Gastrocnemius medialis (tissue), 4 donors: ENCODE measurements at regions of chr15 and their contacts with region 1.

Region 1: DNA sequence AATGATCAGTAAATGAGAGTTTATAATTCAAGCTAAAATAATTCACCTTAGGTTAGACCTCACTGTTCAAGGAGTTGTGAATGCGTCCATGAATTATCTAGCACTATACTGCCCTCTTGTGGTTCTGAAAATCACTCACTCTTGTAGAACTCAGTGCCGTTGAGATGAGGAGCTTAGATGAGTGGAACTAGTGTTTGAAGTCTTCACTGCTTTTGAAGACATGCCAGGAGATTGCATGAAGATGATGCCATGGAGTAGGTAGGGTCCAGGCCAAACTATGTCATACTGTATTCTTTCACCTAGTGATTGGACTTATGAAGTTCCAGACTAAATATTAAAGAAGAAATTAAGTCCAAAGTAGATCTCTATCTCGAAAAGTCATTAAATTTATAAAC is 28.8 kb downstream of the LYSMD4 start:
- DNase-seq: peak in 1 of 2 donors; percentile 44
- ATAC-seq: peak; percentile 59 to 71
- H3K4me3 ChIP-seq: no peak overlapping the region
- H3K27ac ChIP-seq: peak overlapping the region; percentile 82 to 90 (median 84)
- H3K4me1 ChIP-seq: peaks cover 41 to 53% of the 10 kb centered on the region in 2 donors
- H3K27me3 ChIP-seq: no peaks in the 10 kb centered on the region
- CTCF ChIP-seq: peak; percentile 75 to 83 (median 79)
- POLR2A ChIP-seq: no peak

Region 2: DNA sequence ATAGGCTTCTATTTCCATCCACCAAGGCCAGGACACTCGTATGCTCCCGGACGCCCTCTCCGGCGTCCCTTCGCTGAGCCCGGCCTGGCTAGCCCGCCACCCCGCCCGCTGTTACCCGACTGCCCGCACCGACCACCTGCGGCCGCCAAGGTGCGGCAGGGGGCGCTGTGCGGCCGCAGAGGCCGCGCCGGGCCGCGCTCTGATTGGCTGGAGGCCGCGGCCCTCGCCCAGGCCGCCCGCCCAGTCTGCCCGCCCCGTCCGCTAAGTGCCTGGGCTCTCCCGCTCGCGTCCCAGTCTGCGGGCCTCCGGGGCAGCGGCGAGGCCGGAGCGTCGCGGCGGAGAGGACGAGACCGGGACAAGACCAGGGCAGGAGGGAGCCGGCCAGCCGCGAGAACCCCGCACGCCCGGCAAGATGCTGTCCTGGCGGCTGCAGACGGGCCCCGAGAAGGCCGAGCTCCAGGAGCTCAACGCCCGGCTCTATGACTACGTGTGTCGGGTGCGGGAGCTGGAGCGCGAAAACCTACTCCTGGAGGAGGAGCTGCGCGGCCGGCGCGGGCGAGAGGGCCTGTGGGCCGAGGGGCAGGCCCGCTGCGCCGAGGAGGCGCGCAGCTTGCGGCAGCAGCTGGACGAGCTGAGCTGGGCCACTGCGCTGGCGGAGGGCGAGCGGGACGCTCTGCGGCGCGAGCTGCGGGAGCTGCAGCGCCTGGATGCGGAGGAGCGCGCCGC is 599.5 kb before region 1 on chr15 and contains the start of gene SYNM:
- in situ Hi-C with region 1: no loop called
- intact Hi-C with region 1: loop called (anchors 10 kb)
- DNase-seq: peak; percentile 73 to 91
- ATAC-seq: peak; percentile 53 to 57
- H3K4me3 ChIP-seq: peak within 1 kb of the TSS; percentile 63 to 86 (median 75)
- H3K27ac ChIP-seq: peak within 1 kb of the TSS; percentile 88 to 97 (median 94)
- H3K4me1 ChIP-seq: peaks cover 43 to 56% of the 10 kb centered on the region in 2 donors
- H3K27me3 ChIP-seq: no peaks in the 10 kb centered on the region
- CTCF ChIP-seq: peak; percentile 79 to 98 (median 98)
- POLR2A ChIP-seq: peak; percentile 89 to 93
- total RNA-seq, gene SYNM: 200 to 308 (median 266) TPM

Region 3: DNA sequence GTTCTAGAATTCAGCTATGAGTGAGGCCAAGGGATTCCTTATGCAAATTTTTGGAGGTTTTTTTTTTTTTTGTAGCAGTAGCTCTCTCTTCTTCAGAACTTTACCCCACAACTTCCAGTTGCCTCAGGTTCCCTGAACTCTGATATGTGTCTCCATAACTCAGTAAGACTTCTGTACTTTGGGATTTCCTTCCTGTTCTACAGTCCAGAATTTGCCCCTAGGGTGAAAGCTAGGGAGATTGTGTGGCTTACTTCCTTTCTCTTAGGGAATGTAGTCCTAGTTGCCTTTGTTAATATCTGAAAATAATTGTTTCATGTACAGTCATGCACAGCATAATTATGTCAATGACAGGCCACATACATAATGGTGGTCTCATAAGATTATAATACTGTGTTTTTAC is 422.3 kb before region 1 on chr15:
- in situ Hi-C with region 1: loop called in 2 of 4 experiments (anchors 25 kb)
- intact Hi-C with region 1: loop called (anchors 1 kb)
- DNase-seq: no peak
- ATAC-seq: no peak
- H3K4me3 ChIP-seq: no peak overlapping the region
- H3K27ac ChIP-seq: peak overlapping the region in 1 of 4 donors; percentile 34
- H3K4me1 ChIP-seq: peaks cover 11 to 18% of the 10 kb centered on the region in 2 donors
- H3K27me3 ChIP-seq: no peaks in the 10 kb centered on the region
- CTCF ChIP-seq: no peak
- POLR2A ChIP-seq: no peak

Region 4: DNA sequence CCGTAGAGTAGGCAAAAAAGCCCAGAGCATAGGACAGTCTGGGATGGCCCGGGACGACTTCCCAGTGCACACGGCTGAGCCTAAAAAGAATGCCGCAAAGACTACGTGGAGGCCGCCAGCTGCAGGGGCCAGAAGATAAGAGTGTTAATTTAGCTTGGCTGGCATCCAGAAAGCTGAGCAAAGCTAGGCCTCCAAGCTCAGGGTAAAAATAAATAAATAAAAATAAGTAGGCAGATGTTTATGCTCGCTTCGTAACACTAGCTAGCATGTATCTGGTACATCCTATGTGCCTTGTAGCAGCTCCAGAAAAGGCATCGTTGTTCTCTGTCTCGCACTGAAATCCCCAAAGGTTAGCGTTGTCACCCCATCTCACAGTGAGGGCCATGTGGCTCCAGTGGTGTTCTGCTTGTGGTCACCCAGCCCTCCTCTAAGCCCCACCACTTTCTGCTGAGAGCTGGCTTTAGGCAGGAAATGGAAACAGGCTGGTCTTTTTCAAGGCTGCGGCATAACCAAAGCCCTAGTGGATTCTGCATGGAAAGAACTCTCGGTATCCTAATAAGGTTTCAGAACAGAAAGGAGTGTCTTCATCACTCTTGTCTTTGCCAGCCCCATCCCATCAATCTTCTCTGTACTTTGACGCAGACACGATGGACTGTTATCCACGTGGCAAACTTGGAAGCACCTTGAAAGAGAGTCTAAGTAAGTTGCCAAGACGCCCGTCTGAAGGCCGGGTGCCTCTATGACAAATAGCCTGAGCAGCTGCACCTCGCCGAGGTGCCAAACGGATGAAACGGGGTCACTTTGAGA is 196.7 kb before region 1 on chr15:
- in situ Hi-C with region 1: no loop called
- intact Hi-C with region 1: loop called (anchors 2 kb)
- DNase-seq: peak; percentile 90 to 97
- ATAC-seq: peak; percentile 82 to 86
- H3K4me3 ChIP-seq: peak overlapping the region; percentile 31 to 48 (median 34)
- H3K27ac ChIP-seq: peak overlapping the region; percentile 91 to 94 (median 92)
- H3K4me1 ChIP-seq: peaks cover 61 to 70% of the 10 kb centered on the region in 2 donors
- H3K27me3 ChIP-seq: no peaks in the 10 kb centered on the region
- CTCF ChIP-seq: peak in 1 of 5 experiments; percentile 19
- POLR2A ChIP-seq: peak in 1 of 2 donors; percentile 60

Region 5: DNA sequence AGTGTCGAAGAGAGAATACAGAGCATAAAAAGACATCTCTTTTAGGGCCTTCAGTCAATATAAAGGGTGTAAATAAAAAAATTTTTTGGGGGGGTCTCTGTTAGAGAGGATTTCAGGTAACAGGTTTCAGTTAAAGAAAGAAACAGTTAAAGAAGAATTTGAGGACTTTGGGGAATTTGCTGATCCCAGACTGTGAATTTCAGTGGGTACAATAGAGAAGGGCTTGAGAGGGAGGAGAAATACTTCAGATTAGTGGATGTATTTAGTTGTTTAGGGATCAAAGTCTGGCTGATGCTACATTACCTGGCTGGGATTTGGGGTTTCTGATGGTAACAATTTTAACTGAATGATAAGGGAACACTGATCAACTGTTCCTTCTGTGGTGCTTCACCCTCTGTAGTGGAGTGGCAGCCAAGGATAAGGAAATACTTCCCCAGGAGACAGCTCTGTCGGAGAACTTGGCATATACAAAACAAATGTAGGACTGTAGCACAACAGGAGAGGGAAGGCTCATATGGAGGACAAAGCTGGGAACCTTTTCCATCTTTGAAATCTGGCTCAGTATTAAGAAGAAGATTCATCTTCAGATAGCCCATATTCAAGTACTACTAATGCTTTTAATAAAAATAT is 59.4 kb before region 1 on chr15:
- in situ Hi-C with region 1: no loop called
- intact Hi-C with region 1: no loop called
- DNase-seq: no peak
- ATAC-seq: peak in 1 of 2 donors; percentile 54
- H3K4me3 ChIP-seq: no peak overlapping the region
- H3K27ac ChIP-seq: no peak overlapping the region
- H3K4me1 ChIP-seq: peaks cover 13 to 15% of the 10 kb centered on the region in 2 donors
- H3K27me3 ChIP-seq: no peaks in the 10 kb centered on the region
- CTCF ChIP-seq: no peak
- POLR2A ChIP-seq: no peak

Region 6: GRCh38 chr15:99733268-99734039 is 29.0 kb after region 1 on chr15 and contains the start of gene LYSMD4:
- in situ Hi-C with region 1: no loop called
- intact Hi-C with region 1: loop called (anchors 2 kb)
- DNase-seq: peak; percentile 97 to 98
- ATAC-seq: peak; percentile 87 to 91
- H3K4me3 ChIP-seq: peak within 1 kb of the TSS; percentile 76 to 98 (median 84)
- H3K27ac ChIP-seq: peak within 1 kb of the TSS; percentile 85 to 94 (median 90)
- H3K4me1 ChIP-seq: peaks cover 27 to 33% of the 10 kb centered on the region in 2 donors
- H3K27me3 ChIP-seq: no peaks in the 10 kb centered on the region
- CTCF ChIP-seq: peak in 1 of 5 experiments; percentile 6
- POLR2A ChIP-seq: peak; percentile 90 to 94
- total RNA-seq, gene LYSMD4: 5.1 to 15.8 (median 11.9) TPM

Region 7: DNA sequence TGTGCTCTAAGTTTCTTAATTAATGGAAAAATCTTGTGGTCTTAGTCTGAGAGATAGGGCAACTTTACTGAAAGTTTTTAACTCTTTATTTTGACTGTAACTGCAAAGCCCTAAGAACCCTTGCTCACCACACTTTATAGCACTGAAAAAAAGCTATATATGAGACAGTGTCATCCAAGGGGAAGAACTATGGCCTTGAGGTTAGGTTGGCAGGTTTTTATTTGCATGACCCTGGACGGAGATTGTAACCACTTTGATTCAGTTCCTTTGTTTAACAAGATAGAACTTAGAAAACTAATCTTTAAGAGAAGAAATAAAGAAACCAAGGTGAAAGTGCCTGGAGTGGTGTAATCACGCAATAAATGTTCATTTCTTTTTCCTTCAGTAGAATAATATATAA is 59.4 kb after region 1 on chr15:
- in situ Hi-C with region 1: no loop called
- intact Hi-C with region 1: no loop called
- DNase-seq: no peak
- ATAC-seq: no peak
- H3K4me3 ChIP-seq: no peak overlapping the region
- H3K27ac ChIP-seq: no peak overlapping the region
- H3K4me1 ChIP-seq: no peaks in the 10 kb centered on the region
- H3K27me3 ChIP-seq: no peaks in the 10 kb centered on the region
- CTCF ChIP-seq: no peak
- POLR2A ChIP-seq: no peak